ENCODE measurements at regions of chr10 and their contacts with region 1.

Region 1: GRCh38 chr10:80459047-80459931 is 5.2 kb downstream of the TSPAN14 start:
- DNase-seq: peak; percentile 30
- ATAC-seq: peak; percentile 7
- H3K4me3 Mint-ChIP-seq: peak overlapping the region; percentile 50
- H3K27ac Mint-ChIP-seq: peak overlapping the region; percentile 99
- H3K4me1 Mint-ChIP-seq: peaks cover 81% of the 10 kb centered on the region
- H3K27me3 Mint-ChIP-seq: no peaks in the 10 kb centered on the region
- CTCF ChIP-seq: no peak

Region 2: GRCh38 chr10:80408242-80409101 is 50.8 kb before region 1 on chr10 and contains the start of gene PRXL2A:
- CTCF ChIA-PET with region 1: interaction called, 7 read pairs
- POLR2A ChIA-PET with region 1: interaction called, 12 read pairs
- DNase-seq: peak; percentile 94
- ATAC-seq: peak; percentile 95
- H3K4me3 Mint-ChIP-seq: peak within 1 kb of the TSS; percentile 88
- H3K27ac Mint-ChIP-seq: peak within 1 kb of the TSS; percentile 60
- H3K4me1 Mint-ChIP-seq: peaks cover 44% of the 10 kb centered on the region
- H3K27me3 Mint-ChIP-seq: peaks cover 26% of the 10 kb centered on the region
- CTCF ChIP-seq: no peak
- total RNA-seq, gene PRXL2A: 46.6 to 56.5 TPM (median 52.4 TPM) in 3 replicates

Region 3: DNA sequence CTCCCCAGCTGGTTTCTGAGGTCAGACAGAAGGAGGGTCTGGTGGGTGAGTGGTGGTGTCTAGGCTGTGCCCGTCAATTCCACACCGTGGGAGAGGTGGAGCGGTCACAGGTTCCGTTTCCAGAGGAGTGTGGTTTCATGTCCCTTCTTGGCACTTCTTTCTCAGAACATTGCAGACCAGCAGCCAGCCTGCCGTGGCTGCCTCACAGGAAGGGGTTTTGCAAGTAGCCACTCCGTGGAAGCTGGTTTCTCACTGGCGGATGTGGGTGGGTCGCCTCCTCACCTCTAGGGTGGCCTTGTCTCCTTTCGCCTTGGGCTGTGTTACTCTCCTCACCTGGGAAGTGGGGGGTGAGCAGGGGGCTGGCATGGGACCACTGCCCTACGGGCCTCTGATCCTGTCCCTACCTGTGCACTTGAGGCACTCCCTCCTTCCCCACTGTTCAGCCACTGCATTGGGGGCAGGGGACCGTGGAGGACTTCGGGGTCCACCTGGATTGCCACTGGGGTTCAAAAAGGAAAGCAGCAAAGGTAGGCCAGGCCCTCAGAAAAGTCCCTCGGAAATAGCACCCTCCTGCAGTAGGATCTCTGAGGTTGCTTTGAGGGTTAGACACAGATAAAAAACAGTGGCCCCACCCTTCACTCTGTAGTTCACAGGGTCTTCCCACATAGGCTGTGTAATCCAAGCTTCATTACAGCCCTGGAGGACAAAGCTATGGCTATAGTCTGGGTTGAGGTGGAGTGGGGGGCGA is 28.7 kb after region 1 on chr10:
- CTCF ChIA-PET with region 1: interaction called, 10 read pairs
- POLR2A ChIA-PET with region 1: interaction called, 5 read pairs
- DNase-seq: no peak
- ATAC-seq: no peak
- H3K4me3 Mint-ChIP-seq: no peak overlapping the region
- H3K27ac Mint-ChIP-seq: no peak overlapping the region
- H3K4me1 Mint-ChIP-seq: peaks cover 50% of the 10 kb centered on the region
- H3K27me3 Mint-ChIP-seq: no peaks in the 10 kb centered on the region
- CTCF ChIP-seq: no peak

Region 4: DNA sequence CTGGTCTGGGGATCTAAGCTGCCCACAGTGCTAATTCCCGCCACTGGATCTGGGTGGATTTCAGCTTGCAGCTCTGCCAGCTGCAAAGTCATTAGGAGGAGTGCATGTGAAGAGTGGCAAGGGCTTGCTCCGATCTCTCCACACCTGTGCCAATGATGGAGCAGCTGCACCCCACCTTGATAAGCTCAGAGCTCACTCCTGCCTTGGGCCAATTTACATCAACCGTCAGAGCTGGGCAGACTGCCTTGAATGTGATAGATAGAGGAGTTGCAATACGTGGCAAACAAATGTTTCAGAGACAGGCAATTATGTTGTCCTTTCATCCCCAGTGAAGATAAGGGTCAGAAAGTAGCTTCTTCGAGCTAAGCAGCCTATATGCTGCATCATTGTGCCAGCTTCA is 458.3 kb after region 1 on chr10:
- CTCF ChIA-PET with region 1: no interaction called
- POLR2A ChIA-PET with region 1: no interaction called
- DNase-seq: no peak
- ATAC-seq: peak; percentile 30; the same call in 1 of the 2 replicates
- H3K4me3 Mint-ChIP-seq: no peak overlapping the region
- H3K27ac Mint-ChIP-seq: no peak overlapping the region
- H3K4me1 Mint-ChIP-seq: peaks cover 24% of the 10 kb centered on the region
- H3K27me3 Mint-ChIP-seq: no peaks in the 10 kb centered on the region; the same call in 1 of the 2 replicates
- CTCF ChIP-seq: no peak

Measured in WTC11 (cell line).